ENCODE measurements at regions of chr14 and their contacts with region 1.

Region 1: GRCh38 chr14:22047115-22047514 is 373.5 kb upstream of the OR4E1 start:
- DNase-seq: peak; percentile 82
- H3K4me3 Mint-ChIP-seq: peak overlapping the region; percentile 79
- H3K27ac Mint-ChIP-seq: peak overlapping the region; percentile 81
- H3K4me1 Mint-ChIP-seq: peaks cover 35% of the 10 kb centered on the region
- H3K27me3 Mint-ChIP-seq: peaks cover 3% of the 10 kb centered on the region

Region 2: DNA sequence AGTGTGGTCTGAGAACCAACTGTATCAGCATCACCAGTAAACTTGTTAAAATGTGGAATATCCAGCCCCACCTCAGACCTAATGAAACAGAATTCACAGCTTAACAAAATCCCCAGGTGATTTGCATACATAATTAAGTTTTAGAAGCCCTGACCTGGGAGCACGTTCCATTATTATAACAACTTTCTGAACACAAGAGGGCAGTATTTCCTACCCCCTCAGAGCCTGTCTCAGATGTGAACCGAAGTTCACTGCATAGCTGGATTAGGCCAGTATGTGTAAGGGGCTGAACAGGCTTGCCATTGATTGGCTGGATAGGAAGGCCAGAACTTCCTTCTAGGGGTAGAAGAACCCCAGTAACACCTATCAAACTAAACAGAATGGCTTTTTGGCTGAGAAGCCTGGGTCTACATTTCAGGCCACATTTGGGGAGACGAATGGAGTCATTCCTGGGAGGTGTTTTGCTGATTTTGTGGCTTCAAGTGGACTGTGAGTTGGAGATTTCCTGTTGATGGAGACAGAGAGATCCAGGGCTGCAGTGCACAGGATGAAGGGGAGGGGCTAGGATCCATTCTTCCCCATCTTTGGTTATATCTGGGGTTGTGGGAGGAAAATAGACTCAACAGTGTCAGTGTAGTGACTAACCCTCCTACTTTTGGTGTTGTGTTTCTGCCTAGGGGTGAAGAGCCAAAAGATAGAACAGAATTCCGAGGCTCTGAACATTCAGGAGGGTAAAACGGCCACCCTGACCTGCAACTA is 278.8 kb before region 1 on chr14:
- intact Hi-C with region 1: no loop called
- DNase-seq: peak; percentile 77
- H3K4me3 Mint-ChIP-seq: peak overlapping the region; percentile 69
- H3K27ac Mint-ChIP-seq: peak overlapping the region; percentile 77
- H3K4me1 Mint-ChIP-seq: peaks cover 2% of the 10 kb centered on the region
- H3K27me3 Mint-ChIP-seq: peaks cover 8% of the 10 kb centered on the region

Region 3: GRCh38 chr14:22070119-22071011 is 23.2 kb after region 1 on chr14:
- intact Hi-C with region 1: loop called (anchors 2 kb)
- DNase-seq: peak; percentile 86
- H3K4me3 Mint-ChIP-seq: peak overlapping the region; percentile 93
- H3K27ac Mint-ChIP-seq: peak overlapping the region; percentile 95
- H3K4me1 Mint-ChIP-seq: peaks cover 45% of the 10 kb centered on the region
- H3K27me3 Mint-ChIP-seq: no peaks in the 10 kb centered on the region

Region 4: GRCh38 chr14:22084393-22085281 is 37.5 kb after region 1 on chr14:
- intact Hi-C with region 1: loop called (anchors 5 kb)
- DNase-seq: peak; percentile 77
- H3K4me3 Mint-ChIP-seq: peak overlapping the region; percentile 73
- H3K27ac Mint-ChIP-seq: peak overlapping the region; percentile 74
- H3K4me1 Mint-ChIP-seq: peaks cover 17% of the 10 kb centered on the region
- H3K27me3 Mint-ChIP-seq: no peaks in the 10 kb centered on the region

Region 5: DNA sequence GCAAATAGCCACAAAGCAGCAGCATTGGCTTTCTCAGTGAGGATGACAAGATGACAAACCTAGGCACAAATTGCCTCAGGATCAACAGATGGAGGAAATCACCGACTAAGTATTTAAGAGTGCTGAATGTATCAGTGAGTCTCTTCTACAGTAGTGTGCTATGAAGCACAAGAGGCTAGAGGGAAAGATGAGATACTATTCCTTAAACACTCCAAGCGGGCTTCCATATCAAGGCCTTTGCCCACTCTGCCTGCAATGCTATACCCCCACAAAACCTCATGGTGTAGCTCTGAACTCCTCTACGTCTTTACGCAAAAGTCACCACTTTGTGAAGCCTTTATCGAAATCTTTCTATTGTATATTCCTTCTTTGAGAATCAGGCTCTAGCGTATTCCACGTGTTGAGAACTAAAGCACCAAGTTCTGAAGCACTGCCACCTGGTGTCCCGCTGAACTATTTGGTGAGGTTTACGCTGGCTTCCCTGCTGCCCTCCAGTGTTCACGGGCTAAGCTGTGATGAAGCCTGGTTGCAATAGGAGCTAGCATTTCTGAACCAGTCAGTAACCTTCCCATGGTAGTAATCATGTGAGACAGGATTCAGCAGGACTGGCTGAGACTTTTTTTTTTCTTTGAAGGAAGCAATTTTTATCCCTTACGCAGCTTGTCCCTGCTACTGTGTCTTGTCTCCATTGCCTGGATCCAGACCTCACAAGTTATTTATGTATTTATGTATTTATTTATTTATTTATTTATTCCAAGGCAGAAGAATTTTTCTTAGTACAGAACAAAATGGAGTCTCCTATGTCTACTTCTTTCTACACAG is 53.0 kb after region 1 on chr14:
- intact Hi-C with region 1: loop called (anchors 2 kb)
- DNase-seq: peak; percentile 87
- H3K4me3 Mint-ChIP-seq: no peak overlapping the region
- H3K27ac Mint-ChIP-seq: peak overlapping the region; percentile 56
- H3K4me1 Mint-ChIP-seq: peaks cover 38% of the 10 kb centered on the region
- H3K27me3 Mint-ChIP-seq: no peaks in the 10 kb centered on the region

Region 6: GRCh38 chr14:22375321-22375930 is 328.3 kb after region 1 on chr14:
- intact Hi-C with region 1: no loop called
- DNase-seq: no peak
- H3K4me3 Mint-ChIP-seq: no peak overlapping the region
- H3K27ac Mint-ChIP-seq: no peak overlapping the region
- H3K4me1 Mint-ChIP-seq: no peaks in the 10 kb centered on the region
- H3K27me3 Mint-ChIP-seq: no peaks in the 10 kb centered on the region

Region 7: DNA sequence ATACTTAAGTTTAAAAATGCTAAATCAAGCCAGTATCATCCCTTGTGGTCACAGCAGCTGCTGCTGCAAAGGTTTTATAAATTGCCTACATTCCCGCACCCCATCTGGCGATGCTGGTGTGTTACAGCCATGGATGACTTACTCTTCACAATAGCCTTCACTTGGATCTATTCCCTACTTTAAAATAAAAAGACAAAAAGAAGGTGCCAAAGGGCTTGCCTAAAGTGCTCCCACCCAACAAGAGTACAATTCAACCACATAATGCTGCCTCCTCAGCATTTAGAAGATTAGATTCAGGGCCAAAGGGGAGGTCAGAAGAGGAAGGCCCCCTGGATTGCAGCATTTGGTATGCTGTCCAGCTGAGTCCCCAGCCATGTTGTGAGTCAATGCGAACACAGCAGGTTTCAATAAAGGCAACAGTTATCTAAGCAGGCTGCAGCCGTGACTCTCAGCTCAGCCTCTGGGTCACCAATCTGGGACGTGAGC is 365.9 kb after region 1 on chr14:
- intact Hi-C with region 1: no loop called
- DNase-seq: no peak
- H3K4me3 Mint-ChIP-seq: no peak overlapping the region
- H3K27ac Mint-ChIP-seq: no peak overlapping the region
- H3K4me1 Mint-ChIP-seq: no peaks in the 10 kb centered on the region
- H3K27me3 Mint-ChIP-seq: no peaks in the 10 kb centered on the region

Measured in activated CD4-positive, alpha-beta T cell treated with anti-CD3 and anti-CD28 coated beads, Interleukin-2, amount 10 ng/mL, durations not matched to agents 24 days and 14 days (primary cell).